HepG2 (cell line): ENCODE measurements at regions of chr5 and their contacts with region 1.

Region 1: GRCh38 chr5:74648835-74649293 is 8.3 kb upstream of the ENC1 start:
- DNase-seq: peak; percentile 62
- ATAC-seq: peak; percentile 96
- H3K4me3 ChIP-seq: peak overlapping the region in 1 of 3 experiments; percentile 49; a peak in 2 of 6 replicates
- H3K27ac ChIP-seq: no peak overlapping the region
- H3K4me1 ChIP-seq: peaks cover 46% of the 10 kb centered on the region
- H3K27me3 ChIP-seq: 0 out of 5 replicates have a peak, but pooled peaks cover 0 to 3% of the 10 kb centered on the region in 2 experiments
- CTCF ChIP-seq: peak; percentile 87
- EP300 ChIP-seq: no peak
- POLR2A ChIP-seq: no peak
- RAD21 ChIP-seq: peak; percentile 88

Region 2: DNA sequence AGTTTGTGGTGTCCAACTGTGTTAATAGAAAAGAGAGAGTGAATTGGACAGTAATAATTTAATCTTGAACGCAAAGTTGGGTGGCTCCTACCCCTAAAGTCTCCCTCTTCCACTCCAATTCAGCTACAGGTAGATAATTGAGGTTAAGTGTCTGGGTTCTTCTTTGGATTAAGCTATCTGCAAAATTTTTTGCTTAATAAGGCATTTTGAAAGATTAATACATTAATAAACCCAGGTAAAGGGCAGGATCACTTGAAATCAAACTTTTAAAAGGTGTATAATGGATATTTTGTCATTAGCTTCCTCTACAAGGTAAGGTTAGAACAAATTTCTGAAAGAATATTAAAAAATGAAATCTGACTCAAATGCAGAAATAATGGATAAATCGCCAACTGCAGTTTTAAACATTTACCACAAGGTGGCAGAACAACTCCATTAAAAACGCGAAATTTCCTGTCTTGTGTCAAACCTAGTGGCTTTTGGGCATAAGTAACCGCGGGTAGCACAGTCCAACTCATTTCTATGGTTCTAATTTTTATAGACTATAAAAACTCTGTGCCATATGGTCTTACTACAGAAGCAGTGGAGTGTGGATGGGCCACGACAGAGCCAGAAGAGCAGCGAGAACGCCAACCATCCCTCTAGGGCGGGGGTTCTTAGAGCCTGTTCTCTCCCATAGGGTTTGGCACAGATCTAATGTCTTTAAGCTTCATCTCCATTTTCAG is 746.4 kb before region 1 on chr5:
- CTCF ChIA-PET with region 1: interaction called, 25 read pairs
- POLR2A ChIA-PET with region 1: no interaction called
- in situ Hi-C with region 1: loop called (anchors 5 kb)
- intact Hi-C with region 1: loop called (anchors 1 kb)
- DNase-seq: peak; percentile 41
- ATAC-seq: peak; percentile 28; the same call in 2 of the 3 replicates
- H3K4me3 ChIP-seq: no peak overlapping the region
- H3K27ac ChIP-seq: no peak overlapping the region
- H3K4me1 ChIP-seq: no peaks in the 10 kb centered on the region
- H3K27me3 ChIP-seq: no peaks in the 10 kb centered on the region
- CTCF ChIP-seq: peak; percentile 73
- EP300 ChIP-seq: no peak
- POLR2A ChIP-seq: no peak
- RAD21 ChIP-seq: peak; percentile 56; the same call in 1 of the 2 replicates

Region 3: GRCh38 chr5:73985145-73985544 is 663.7 kb before region 1 on chr5:
- CTCF ChIA-PET with region 1: interaction called, 5 read pairs
- POLR2A ChIA-PET with region 1: no interaction called
- in situ Hi-C with region 1: no loop called
- intact Hi-C with region 1: loop called (anchors 1 kb)
- DNase-seq: peak; percentile 69
- ATAC-seq: peak; percentile 89
- H3K4me3 ChIP-seq: no peak overlapping the region
- H3K27ac ChIP-seq: no peak overlapping the region
- H3K4me1 ChIP-seq: peaks cover 29% of the 10 kb centered on the region
- H3K27me3 ChIP-seq: peaks cover 0 to 1% of the 10 kb centered on the region in 2 experiments; a peak in 1 of 5 replicates
- CTCF ChIP-seq: peak; percentile 74
- EP300 ChIP-seq: peak in 1 of 2 experiments; percentile 75; a peak in 1 of 4 replicates
- POLR2A ChIP-seq: no peak
- RAD21 ChIP-seq: no peak; the same call in 1 of the 2 replicates

Region 4: GRCh38 chr5:74035521-74035981 is 613.3 kb before region 1 on chr5:
- CTCF ChIA-PET with region 1: interaction called, 3 read pairs
- POLR2A ChIA-PET with region 1: no interaction called
- in situ Hi-C with region 1: loop called (anchors 10 kb)
- intact Hi-C with region 1: loop called (anchors 1 kb)
- DNase-seq: peak; percentile 49
- ATAC-seq: peak; percentile 61
- H3K4me3 ChIP-seq: no peak overlapping the region
- H3K27ac ChIP-seq: no peak overlapping the region
- H3K4me1 ChIP-seq: peaks cover 6% of the 10 kb centered on the region; the same call in 1 of the 2 replicates
- H3K27me3 ChIP-seq: peaks cover 0 to 3% of the 10 kb centered on the region in 2 experiments; a peak in 2 of 5 replicates
- CTCF ChIP-seq: peak; percentile 74
- EP300 ChIP-seq: no peak
- POLR2A ChIP-seq: no peak
- RAD21 ChIP-seq: no peak

Region 5: DNA sequence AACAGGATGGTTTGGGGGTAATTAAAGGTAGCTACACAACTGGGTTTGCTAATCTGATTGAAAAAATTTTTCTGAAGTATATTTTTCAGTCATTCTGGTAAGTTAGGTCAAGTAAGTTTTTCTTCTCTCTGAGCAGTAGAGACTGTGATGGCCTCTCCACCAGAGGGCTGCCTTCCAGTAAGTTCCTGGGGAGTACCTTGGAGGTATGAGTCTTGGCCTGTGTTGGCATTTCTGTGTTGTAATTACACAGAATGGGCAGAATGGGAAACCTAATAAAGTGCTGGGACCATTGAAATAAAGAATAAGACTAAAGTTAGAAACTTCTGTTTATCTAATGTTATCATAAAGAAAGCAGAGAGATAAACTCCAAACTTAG is 592.1 kb before region 1 on chr5:
- CTCF ChIA-PET with region 1: no interaction called
- POLR2A ChIA-PET with region 1: no interaction called
- in situ Hi-C with region 1: no loop called
- intact Hi-C with region 1: loop called (anchors 2 kb)
- DNase-seq: peak; percentile 9
- ATAC-seq: peak; percentile 61; the same call in 2 of the 3 replicates
- H3K4me3 ChIP-seq: no peak overlapping the region
- H3K27ac ChIP-seq: no peak overlapping the region
- H3K4me1 ChIP-seq: no peaks in the 10 kb centered on the region
- H3K27me3 ChIP-seq: no peaks in the 10 kb centered on the region; a peak in 2 of 5 replicates
- CTCF ChIP-seq: 0 out of 2 replicates have a peak, but pooled peaks have one; percentile 24
- EP300 ChIP-seq: no peak
- POLR2A ChIP-seq: no peak
- RAD21 ChIP-seq: no peak

Region 6: DNA sequence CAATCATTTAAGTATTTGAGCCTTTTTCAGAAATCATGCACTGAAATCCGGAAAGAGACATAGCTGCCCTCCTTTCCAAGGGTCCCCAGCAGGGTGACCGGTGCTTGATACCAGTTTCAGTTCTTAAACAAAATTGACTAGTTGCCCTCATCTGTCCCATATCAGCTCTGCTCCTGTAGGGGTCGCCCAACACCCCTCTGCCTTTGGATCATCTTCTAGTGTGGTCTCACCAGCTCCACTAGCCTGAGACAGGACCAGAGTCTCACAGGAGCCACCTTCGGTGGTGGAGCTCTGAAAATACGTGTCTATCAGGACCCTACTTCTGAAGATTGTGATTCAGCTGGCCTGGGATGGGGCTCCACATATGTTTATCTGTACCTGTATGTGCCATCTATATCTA is 436.5 kb before region 1 on chr5:
- CTCF ChIA-PET with region 1: interaction called, 4 read pairs
- POLR2A ChIA-PET with region 1: no interaction called
- in situ Hi-C with region 1: no loop called
- intact Hi-C with region 1: loop called (anchors 1 kb)
- DNase-seq: peak; percentile 39
- ATAC-seq: peak; percentile 85
- H3K4me3 ChIP-seq: no peak overlapping the region
- H3K27ac ChIP-seq: no peak overlapping the region
- H3K4me1 ChIP-seq: no peaks in the 10 kb centered on the region
- H3K27me3 ChIP-seq: peaks cover 0 to 7% of the 10 kb centered on the region in 2 experiments; a peak in 2 of 5 replicates
- CTCF ChIP-seq: peak; percentile 62
- EP300 ChIP-seq: no peak
- POLR2A ChIP-seq: no peak
- RAD21 ChIP-seq: no peak; the same call in 1 of the 2 replicates

Region 7: DNA sequence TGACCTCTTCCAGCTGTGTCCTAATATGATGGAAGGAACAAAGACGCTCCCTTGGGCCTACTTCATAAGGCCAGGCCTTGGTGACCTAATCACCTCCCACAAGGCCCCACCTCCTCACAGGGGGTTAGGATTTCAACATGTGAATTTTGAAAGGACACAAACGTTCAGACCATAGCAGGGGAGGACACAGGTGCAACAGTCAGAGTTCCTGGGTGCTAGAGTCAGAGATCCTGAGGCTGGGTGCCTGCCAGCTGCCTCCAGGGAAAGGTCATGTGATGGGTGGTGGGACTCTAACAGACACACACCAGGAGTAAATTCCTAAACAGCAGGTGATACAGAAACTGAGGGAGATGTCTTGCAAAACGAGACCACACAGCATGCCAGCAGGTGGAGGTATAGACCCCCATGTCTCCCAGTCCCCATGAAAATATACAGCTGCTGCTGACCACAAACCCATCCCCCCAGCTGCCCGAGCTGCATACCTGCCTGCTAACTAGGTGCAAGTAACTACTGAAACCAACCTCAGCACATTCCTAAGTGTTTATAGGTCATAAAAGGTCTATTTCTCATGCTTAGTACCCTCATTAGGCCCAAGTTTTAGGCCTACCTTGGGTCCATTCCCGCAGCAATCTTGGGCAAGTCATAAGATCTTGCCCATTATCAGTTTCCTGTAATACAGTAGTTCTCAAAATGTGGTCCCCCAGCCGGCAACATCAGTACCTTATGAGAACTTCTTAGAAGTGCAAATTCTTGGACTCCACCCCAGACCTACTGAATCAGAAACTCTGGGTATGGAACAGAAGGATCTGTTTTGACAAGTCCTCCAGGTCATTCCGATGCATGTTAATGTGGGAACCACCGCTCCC is 253.7 kb before region 1 on chr5:
- CTCF ChIA-PET with region 1: interaction called, 3 read pairs
- POLR2A ChIA-PET with region 1: no interaction called
- in situ Hi-C with region 1: loop called (anchors 5 kb)
- intact Hi-C with region 1: loop called (anchors 1 kb)
- DNase-seq: peak; percentile 60
- ATAC-seq: peak; percentile 81
- H3K4me3 ChIP-seq: peak overlapping the region in 1 of 3 experiments; percentile 22; a peak in 1 of 6 replicates
- H3K27ac ChIP-seq: no peak overlapping the region
- H3K4me1 ChIP-seq: peaks cover 45% of the 10 kb centered on the region
- H3K27me3 ChIP-seq: no peaks in the 10 kb centered on the region
- CTCF ChIP-seq: peak; percentile 75
- EP300 ChIP-seq: no peak
- POLR2A ChIP-seq: no peak
- RAD21 ChIP-seq: peak; percentile 75

Region 8: GRCh38 chr5:74471875-74472274 is 177.0 kb before region 1 on chr5:
- CTCF ChIA-PET with region 1: no interaction called
- POLR2A ChIA-PET with region 1: no interaction called
- in situ Hi-C with region 1: no loop called
- intact Hi-C with region 1: no loop called
- DNase-seq: no peak
- ATAC-seq: no peak
- H3K4me3 ChIP-seq: no peak overlapping the region
- H3K27ac ChIP-seq: no peak overlapping the region
- H3K4me1 ChIP-seq: peaks cover 12% of the 10 kb centered on the region; the same call in 1 of the 2 replicates
- H3K27me3 ChIP-seq: no peaks in the 10 kb centered on the region
- CTCF ChIP-seq: no peak
- EP300 ChIP-seq: no peak
- POLR2A ChIP-seq: no peak
- RAD21 ChIP-seq: no peak

Region 9: DNA sequence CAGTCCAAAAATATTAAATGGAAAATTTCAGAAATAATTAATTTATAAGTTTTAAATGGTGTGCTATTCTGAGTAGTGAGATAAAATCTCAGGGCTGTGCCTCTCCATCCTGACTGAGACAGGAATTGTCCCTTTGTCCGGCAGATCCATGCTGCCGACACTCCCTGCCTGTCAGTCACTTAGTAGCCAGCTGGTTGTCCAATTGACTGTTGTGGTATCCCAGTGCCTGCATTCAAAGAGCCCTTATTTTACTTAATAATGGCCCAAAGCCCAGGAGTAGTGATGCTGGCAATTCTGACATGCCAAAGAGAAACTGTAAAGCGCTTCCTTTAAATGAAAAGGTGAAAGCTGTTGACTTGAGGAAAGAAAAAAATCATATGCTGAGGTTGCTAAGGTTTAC is 165.9 kb before region 1 on chr5:
- CTCF ChIA-PET with region 1: no interaction called
- POLR2A ChIA-PET with region 1: no interaction called
- in situ Hi-C with region 1: no loop called
- intact Hi-C with region 1: no loop called
- DNase-seq: no peak
- ATAC-seq: no peak
- H3K4me3 ChIP-seq: no peak overlapping the region
- H3K27ac ChIP-seq: no peak overlapping the region
- H3K4me1 ChIP-seq: peaks cover 15% of the 10 kb centered on the region
- H3K27me3 ChIP-seq: no peaks in the 10 kb centered on the region
- CTCF ChIP-seq: no peak
- EP300 ChIP-seq: no peak
- POLR2A ChIP-seq: no peak
- RAD21 ChIP-seq: no peak

Region 10: DNA sequence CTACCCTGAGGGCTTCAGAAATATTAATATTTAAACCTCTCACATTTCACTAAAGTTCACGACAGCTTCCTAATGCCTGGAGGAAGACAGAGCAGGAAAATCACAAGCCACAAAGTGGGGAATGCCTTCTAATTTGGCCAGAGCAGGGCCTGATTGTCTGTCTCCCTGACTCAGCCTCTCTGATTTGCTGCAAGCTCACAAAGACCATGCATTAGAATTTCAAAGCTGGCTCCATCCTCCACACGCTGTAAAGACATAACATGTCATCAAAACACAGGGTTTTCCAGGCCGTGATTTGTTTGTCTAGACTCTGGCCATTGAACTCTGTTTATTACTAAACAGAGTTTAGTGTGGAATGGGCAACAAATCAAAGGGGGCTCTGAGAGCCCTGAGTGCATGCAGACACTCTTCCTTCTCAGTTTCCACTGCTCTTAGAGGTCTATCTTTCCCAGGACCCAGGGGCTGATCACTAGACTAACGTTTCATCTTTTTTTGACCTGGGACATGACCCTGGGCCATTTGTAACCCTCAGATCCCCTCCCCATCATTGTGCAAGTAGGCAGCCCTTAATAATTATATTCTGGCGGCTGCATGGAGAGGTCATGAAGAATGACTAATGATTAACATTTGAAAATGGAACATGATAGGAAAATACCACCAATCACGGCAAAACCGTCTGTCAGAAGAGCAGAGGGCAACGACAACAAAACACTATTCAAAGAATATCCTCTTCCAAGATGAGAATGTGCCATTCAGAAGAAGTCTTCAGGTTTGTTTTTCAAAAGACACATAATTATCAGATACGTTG is 148.6 kb before region 1 on chr5:
- CTCF ChIA-PET with region 1: no interaction called
- POLR2A ChIA-PET with region 1: no interaction called
- in situ Hi-C with region 1: no loop called
- intact Hi-C with region 1: no loop called
- DNase-seq: peak; percentile 96
- ATAC-seq: peak; percentile 83
- H3K4me3 ChIP-seq: peak overlapping the region; percentile 43 to 50 (median 47); a peak in 5 of 6 replicates
- H3K27ac ChIP-seq: peak overlapping the region; percentile 72
- H3K4me1 ChIP-seq: peaks cover 80% of the 10 kb centered on the region
- H3K27me3 ChIP-seq: no peaks in the 10 kb centered on the region
- CTCF ChIP-seq: no peak
- EP300 ChIP-seq: peak in 1 of 2 experiments; percentile 94; a peak in 2 of 4 replicates
- POLR2A ChIP-seq: 0 out of 4 replicates have a peak, but pooled peaks of 1 of the 2 experiments have one; percentile 19
- RAD21 ChIP-seq: no peak

Region 11: DNA sequence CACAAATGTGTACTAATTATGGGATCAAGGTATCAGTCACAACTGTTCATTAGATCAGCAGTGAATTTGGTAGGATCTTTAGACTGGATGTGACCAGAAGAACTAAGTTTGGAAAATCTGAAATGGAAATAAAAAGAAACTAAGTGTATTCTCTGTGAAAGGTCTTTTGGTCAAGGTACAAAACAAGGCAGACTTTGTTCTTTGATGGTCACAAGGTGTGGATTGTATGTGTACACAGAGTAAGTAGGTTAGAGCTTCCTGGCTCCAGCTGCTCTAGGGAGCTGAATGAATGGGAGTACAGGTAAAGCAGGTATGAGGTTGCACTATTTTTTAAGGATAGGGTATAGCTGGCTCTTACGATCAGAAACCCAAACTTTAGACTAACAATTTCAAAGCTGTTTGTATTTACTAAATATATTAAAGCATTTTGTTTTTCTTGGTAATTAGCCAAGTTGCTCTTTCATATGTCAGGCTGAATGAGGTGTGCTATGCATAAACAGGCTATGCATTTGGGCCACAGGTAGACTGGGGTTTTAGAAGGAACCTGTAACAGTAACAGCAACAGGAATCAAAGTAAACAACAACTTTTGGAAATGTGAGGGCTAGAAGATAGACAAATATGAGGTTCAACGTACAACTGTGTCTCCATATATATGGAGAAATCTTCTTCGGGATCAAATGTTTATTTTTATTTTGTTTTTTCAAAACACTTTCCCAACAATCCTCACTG is 184.8 kb after region 1 on chr5:
- CTCF ChIA-PET with region 1: no interaction called
- POLR2A ChIA-PET with region 1: no interaction called
- in situ Hi-C with region 1: no loop called
- intact Hi-C with region 1: no loop called
- DNase-seq: peak; percentile 89
- ATAC-seq: peak; percentile 97
- H3K4me3 ChIP-seq: peak overlapping the region in 1 of 3 experiments; percentile 21; a peak in 1 of 6 replicates
- H3K27ac ChIP-seq: peak overlapping the region; percentile 75
- H3K4me1 ChIP-seq: peaks cover 42% of the 10 kb centered on the region
- H3K27me3 ChIP-seq: no peaks in the 10 kb centered on the region
- CTCF ChIP-seq: no peak
- EP300 ChIP-seq: peak in 1 of 2 experiments; percentile 75; a peak in 2 of 4 replicates
- POLR2A ChIP-seq: no peak
- RAD21 ChIP-seq: no peak